ENCODE measurements at regions of chr2 and their contacts with region 1.

Region 1: DNA sequence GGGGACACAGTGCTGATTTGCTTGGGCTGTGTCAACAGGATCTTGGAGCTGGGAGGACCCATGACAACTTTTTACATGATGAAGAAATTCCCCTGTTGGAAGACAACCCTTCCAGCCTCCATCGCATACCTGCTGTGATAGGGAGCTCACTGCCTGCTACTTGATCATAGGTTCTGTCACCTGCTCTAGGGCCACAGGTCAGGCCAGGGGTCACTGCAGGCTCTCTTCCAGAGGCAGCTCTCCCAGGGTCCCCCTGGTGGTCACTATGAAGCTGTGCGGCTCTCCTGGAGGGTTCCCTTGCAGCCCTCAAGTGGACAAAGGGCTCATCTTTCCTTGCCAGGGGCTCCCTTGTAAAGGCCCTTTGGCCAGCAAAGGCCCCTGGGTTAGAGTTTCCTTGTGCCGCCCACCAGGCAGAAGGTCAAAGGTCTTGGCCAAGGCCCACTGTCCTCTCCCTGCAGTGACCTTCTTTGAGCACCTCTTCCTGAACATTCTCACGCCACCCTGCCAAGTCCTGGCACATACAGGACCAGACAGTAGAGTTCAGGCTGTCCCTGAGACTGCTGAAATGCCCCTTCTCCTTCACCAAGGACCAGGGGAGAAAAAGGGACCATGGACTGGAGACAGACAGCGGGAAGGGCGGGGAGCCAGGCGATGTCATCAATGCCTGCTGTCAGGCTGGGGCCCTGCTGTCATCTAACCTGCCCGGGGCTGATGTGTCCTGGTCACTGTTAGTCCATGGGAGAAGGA is 345.1 kb downstream of the DYSF start:
- DNase-seq: peak in 1 of 2 donors; percentile 63
- H3K4me3 ChIP-seq: no peak overlapping the region
- H3K27ac ChIP-seq: no peak overlapping the region
- H3K4me1 ChIP-seq: peaks cover 7 to 13% of the 10 kb centered on the region in 2 donors
- H3K27me3 ChIP-seq: no peaks in the 10 kb centered on the region
- CTCF ChIP-seq: peak; percentile 69 to 78 (median 72)

Region 2: DNA sequence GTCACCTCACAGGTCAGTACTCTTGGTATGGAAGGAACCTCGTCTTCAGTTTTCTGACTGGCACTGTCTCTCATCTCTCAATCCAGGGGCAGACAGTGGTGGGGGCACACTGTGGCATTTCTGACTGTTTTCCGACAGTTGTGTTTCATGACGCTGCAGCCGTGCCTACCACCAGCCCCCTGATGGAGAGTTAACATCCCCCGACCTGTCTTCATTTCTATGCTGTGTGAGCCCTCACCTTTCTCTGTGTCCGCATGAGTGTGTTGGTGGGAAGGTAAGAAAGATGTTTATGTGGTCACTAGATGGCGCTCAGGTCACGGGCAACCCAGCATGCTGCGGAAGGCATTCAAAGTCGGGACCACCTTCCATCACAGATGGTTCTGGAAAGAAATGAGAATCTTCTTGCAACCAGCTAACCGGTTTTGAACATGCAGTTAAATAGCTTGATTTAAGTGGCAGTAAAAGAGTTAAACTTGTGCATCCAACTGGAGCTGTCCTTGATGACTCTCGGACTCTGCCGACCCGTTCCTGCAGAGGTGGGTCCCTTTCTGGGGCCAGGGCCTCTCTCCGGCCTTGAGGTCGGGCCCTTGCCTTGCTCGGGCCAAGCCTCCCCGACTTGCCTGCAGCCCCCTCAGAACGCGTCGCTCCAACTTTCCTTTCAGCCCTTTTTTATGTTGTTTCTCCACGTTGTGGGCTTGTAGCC is 252.7 kb before region 1 on chr2:
- intact Hi-C with region 1: loop called (anchors 2 kb)
- DNase-seq: peak in 1 of 2 donors; percentile 76
- H3K4me3 ChIP-seq: no peak overlapping the region
- H3K27ac ChIP-seq: no peak overlapping the region
- H3K4me1 ChIP-seq: no peaks in the 10 kb centered on the region
- H3K27me3 ChIP-seq: no peaks in the 10 kb centered on the region
- CTCF ChIP-seq: peak; percentile 74 to 84 (median 75)

Region 3: GRCh38 chr2:71691747-71692501 is 106.5 kb before region 1 on chr2:
- intact Hi-C with region 1: loop called (anchors 5 kb)
- DNase-seq: no peak
- H3K4me3 ChIP-seq: no peak overlapping the region
- H3K27ac ChIP-seq: peak overlapping the region in 1 of 2 donors; percentile 49
- H3K4me1 ChIP-seq: peaks cover 0 to 8% of the 10 kb centered on the region in 2 donors
- H3K27me3 ChIP-seq: no peaks in the 10 kb centered on the region
- CTCF ChIP-seq: no peak

Region 4: DNA sequence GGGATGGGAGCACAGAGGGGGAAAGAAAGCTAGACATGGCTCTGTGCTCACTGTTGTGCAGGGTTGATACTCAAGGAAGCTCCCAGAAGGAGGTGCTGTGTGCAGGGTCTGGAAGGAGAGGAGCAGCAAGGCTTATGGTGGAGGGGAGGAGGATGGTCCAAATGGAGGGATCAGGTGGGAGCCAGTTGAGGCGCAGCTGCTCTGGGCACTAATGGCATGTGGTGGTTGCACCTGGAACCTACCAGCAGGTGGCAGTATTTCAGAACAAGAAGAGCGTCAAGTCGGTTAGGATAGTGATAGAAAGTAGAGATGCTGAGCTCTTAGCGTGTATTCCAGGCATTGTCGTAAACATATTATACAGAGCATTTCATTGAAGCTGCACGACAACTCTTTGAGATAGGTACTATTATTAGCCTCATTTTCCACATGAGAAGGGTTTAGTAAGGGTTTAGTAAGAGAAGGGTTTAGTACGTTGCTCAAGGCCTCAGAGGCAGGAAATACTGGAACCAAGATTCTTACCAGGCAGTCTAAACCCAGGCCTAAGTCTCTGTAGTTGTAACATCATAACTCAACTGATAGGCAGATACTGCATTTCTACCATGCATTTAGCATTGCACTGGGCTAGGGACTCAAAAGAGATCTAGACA is 125.6 kb after region 1 on chr2:
- intact Hi-C with region 1: loop called (anchors 5 kb)
- DNase-seq: no peak
- H3K4me3 ChIP-seq: no peak overlapping the region
- H3K27ac ChIP-seq: no peak overlapping the region
- H3K4me1 ChIP-seq: no peaks in the 10 kb centered on the region
- H3K27me3 ChIP-seq: no peaks in the 10 kb centered on the region
- CTCF ChIP-seq: peak; percentile 58 to 85 (median 78)

Region 5: GRCh38 chr2:72579591-72580180 is 781.2 kb after region 1 on chr2:
- intact Hi-C with region 1: loop called (anchors 5 kb)
- DNase-seq: no peak
- H3K4me3 ChIP-seq: no peak overlapping the region
- H3K27ac ChIP-seq: no peak overlapping the region
- H3K4me1 ChIP-seq: no peaks in the 10 kb centered on the region
- H3K27me3 ChIP-seq: no peaks in the 10 kb centered on the region
- CTCF ChIP-seq: peak; percentile 43 to 69 (median 54)

Measured in ascending aorta (tissue), 2 donors.